Activated CD4-positive, alpha-beta memory T cell treated with anti-CD3 and anti-CD28 coated beads for 36 hours (primary cell): ENCODE measurements at regions of chr19 and their contacts with region 1.

Region 1: DNA sequence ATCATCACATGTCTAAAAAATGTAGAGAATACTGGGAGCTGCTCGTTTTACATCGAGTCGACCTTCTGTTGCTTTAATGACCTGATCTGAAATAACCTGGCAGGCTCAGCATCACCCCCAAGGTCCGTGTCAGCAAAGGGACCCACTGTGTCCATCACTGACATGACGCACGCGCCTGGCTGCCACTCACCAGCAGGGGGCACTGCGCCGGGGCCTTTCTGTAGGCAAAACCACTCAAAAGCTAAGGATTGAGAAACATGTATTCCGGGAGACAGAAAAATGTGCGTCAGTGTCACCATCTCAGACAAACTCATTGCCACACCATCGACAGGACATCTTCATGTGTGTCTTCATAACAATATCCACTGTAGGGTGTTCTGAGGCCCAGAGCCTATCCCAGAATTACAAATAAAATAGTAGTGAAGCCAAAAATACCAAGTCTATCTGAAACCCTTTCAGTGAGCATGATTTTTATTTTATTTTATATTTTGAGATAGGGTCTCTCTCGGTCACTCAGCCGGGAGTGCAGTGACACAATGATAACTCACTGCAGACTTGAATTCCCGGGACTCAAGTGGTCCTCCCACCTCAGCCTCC is 130.3 kb upstream of the LSM14A start:
- DNase-seq: peak; percentile 86
- H3K4me3 Mint-ChIP-seq: no peak overlapping the region
- H3K27ac Mint-ChIP-seq: no peak overlapping the region
- H3K4me1 Mint-ChIP-seq: no peaks in the 10 kb centered on the region
- H3K27me3 Mint-ChIP-seq: peaks cover 11% of the 10 kb centered on the region

Region 2: DNA sequence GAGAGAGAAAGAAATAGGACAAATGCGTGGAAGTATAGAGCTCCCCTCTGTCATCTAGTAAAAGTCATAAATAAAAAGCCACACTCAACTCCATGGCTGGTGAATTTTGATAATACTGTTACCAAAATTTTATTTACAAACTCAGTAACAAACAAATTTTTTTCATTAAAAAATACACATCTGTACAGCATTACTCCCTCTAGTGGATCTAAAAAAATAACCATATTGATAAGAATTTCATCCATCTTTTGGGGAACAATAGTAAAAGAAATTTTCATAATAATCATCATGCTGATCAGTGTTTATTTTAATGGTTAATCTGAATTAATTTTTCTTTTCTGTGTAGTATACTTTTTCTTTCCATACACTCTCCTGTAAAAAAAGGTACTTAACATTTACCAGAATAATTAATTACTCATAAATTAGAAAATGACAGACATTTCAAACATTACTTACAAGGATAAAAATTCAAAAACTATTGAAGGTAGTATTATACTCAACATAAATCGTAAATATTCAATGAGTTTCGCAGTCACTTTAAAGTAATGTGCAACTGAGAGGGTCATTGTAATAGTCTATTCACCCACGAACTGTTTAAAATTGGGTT is 43.2 kb before region 1 on chr19:
- CTCF ChIA-PET with region 1: interaction called, 10 read pairs
- POLR2A ChIA-PET with region 1: no interaction called
- intact Hi-C with region 1: no loop called
- DNase-seq: no peak
- H3K4me3 Mint-ChIP-seq: no peak overlapping the region
- H3K27ac Mint-ChIP-seq: no peak overlapping the region
- H3K4me1 Mint-ChIP-seq: no peaks in the 10 kb centered on the region
- H3K27me3 Mint-ChIP-seq: peaks cover 7% of the 10 kb centered on the region

Region 3: GRCh38 chr19:34096020-34096915 is 54.2 kb after region 1 on chr19:
- CTCF ChIA-PET with region 1: interaction called, 45 read pairs
- POLR2A ChIA-PET with region 1: no interaction called
- intact Hi-C with region 1: loop called (anchors 1 kb)
- DNase-seq: no peak
- H3K4me3 Mint-ChIP-seq: no peak overlapping the region
- H3K27ac Mint-ChIP-seq: no peak overlapping the region
- H3K4me1 Mint-ChIP-seq: peaks cover 2% of the 10 kb centered on the region
- H3K27me3 Mint-ChIP-seq: peaks cover 6% of the 10 kb centered on the region

Region 4: DNA sequence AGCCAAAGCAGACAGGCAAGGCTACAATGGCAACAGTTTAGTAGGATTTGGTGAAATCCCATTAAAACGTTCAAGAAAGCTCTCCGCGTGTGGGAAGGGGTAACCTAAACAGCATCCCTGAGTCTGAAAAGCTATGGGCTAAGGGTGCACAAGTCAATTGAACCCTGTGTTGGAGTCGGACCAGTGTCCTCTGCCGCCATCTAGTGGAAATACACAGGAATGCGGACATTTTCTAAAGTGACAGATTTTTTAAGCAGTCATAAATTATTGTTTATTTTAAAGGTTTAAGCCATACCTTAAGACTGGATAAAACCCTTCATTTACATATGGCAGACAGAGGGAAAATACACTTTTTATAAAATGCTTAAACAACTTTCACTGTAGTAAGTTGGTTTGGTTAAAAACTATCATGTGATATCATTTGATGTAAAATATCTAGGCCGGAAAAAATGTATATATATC is 103.7 kb after region 1 on chr19:
- CTCF ChIA-PET with region 1: interaction called, 42 read pairs
- POLR2A ChIA-PET with region 1: no interaction called
- intact Hi-C with region 1: loop called (anchors 1 kb)
- DNase-seq: peak; percentile 66
- H3K4me3 Mint-ChIP-seq: no peak overlapping the region
- H3K27ac Mint-ChIP-seq: no peak overlapping the region
- H3K4me1 Mint-ChIP-seq: no peaks in the 10 kb centered on the region
- H3K27me3 Mint-ChIP-seq: no peaks in the 10 kb centered on the region